Mammary epithelial cell (primary cell): ENCODE measurements at regions of chr18 and their contacts with region 1.

Region 1: DNA sequence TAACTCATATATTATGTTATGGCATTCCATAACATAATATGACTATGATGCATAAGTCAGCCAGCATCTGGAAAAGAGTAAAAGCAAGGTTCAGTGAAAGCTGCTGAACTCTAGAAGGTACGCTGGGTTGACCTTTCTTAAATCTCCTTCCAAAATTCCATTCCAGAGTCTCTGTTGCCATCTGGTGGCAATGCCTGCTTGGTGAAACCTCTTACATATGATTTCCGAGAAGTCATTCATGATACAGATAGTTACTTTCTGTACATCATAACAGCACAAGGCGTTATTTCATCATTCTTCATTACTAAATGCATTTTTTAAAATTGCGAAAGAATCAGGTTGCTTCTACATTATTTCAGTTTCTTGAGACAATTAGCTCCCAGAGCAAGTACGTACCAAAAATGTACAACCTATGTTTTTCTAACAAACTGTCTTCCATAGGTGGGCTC is 7.0 kb upstream of the EPG5 start:
- DNase-seq: peak; percentile 76
- H3K4me3 ChIP-seq: no peak overlapping the region
- H3K27ac ChIP-seq: no peak overlapping the region
- H3K4me1 ChIP-seq: no peaks in the 10 kb centered on the region
- H3K27me3 ChIP-seq: no peaks in the 10 kb centered on the region
- CTCF ChIP-seq: peak; percentile 83 to 87

Region 2: GRCh38 chr18:45664824-45665763 is 309.0 kb before region 1 on chr18:
- CTCF ChIA-PET with region 1: no interaction called
- dilution Hi-C with region 1: no loop called
- in situ Hi-C with region 1: no loop called
- intact Hi-C with region 1: loop called (anchors 1 kb)
- DNase-seq: peak; percentile 34
- H3K4me3 ChIP-seq: no peak overlapping the region
- H3K27ac ChIP-seq: no peak overlapping the region
- H3K4me1 ChIP-seq: no peaks in the 10 kb centered on the region
- H3K27me3 ChIP-seq: no peaks in the 10 kb centered on the region
- CTCF ChIP-seq: peak; percentile 90 to 96

Region 3: DNA sequence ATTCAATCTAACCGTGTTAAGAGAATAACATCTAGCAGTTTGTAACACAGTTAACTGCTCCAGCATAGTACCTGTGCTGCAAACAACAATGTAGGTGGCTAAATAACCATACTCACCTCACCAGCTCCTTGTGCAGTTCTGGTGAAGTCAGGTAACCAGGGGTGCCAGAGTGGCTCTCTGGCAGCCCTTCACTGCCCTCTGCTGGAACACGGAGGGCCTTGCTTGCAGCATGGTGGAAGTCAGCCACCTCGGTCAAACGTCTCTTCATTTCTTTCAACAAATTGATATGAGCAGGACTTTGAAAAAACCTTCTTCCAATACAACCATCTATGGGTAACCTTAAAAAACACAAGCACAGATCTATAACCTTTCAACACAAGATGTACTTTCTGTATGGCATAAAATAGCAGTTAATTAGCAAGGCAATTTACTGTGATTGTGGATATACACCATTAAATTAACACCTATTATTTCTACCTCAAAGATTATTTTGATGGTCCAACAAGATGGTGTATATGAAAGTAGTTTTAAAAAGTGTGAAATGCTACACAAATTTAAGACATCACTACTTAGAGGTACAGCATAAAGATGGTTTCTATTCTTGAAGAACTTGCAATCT is 63.6 kb before region 1 on chr18:
- CTCF ChIA-PET with region 1: interaction called, 5 read pairs
- dilution Hi-C with region 1: no loop called
- in situ Hi-C with region 1: no loop called
- intact Hi-C with region 1: loop called (anchors 1 kb)
- DNase-seq: peak; percentile 32
- H3K4me3 ChIP-seq: no peak overlapping the region
- H3K27ac ChIP-seq: no peak overlapping the region
- H3K4me1 ChIP-seq: no peaks in the 10 kb centered on the region
- H3K27me3 ChIP-seq: no peaks in the 10 kb centered on the region
- CTCF ChIP-seq: peak; percentile 87 to 96

Region 4: GRCh38 chr18:45920367-45920766 is 53.7 kb before region 1 on chr18:
- CTCF ChIA-PET with region 1: no interaction called
- dilution Hi-C with region 1: no loop called
- in situ Hi-C with region 1: no loop called
- intact Hi-C with region 1: loop called (anchors 1 kb)
- DNase-seq: peak; percentile 89
- H3K4me3 ChIP-seq: no peak overlapping the region
- H3K27ac ChIP-seq: peak overlapping the region; percentile 31
- H3K4me1 ChIP-seq: peaks cover 14% of the 10 kb centered on the region
- H3K27me3 ChIP-seq: no peaks in the 10 kb centered on the region
- CTCF ChIP-seq: no peak

Region 5: GRCh38 chr18:45930963-45931362 is 43.1 kb before region 1 on chr18:
- CTCF ChIA-PET with region 1: no interaction called
- dilution Hi-C with region 1: no loop called
- in situ Hi-C with region 1: no loop called
- intact Hi-C with region 1: loop called (anchors 2 kb)
- DNase-seq: no peak
- H3K4me3 ChIP-seq: no peak overlapping the region
- H3K27ac ChIP-seq: no peak overlapping the region
- H3K4me1 ChIP-seq: no peaks in the 10 kb centered on the region
- H3K27me3 ChIP-seq: no peaks in the 10 kb centered on the region
- CTCF ChIP-seq: no peak

Region 6: DNA sequence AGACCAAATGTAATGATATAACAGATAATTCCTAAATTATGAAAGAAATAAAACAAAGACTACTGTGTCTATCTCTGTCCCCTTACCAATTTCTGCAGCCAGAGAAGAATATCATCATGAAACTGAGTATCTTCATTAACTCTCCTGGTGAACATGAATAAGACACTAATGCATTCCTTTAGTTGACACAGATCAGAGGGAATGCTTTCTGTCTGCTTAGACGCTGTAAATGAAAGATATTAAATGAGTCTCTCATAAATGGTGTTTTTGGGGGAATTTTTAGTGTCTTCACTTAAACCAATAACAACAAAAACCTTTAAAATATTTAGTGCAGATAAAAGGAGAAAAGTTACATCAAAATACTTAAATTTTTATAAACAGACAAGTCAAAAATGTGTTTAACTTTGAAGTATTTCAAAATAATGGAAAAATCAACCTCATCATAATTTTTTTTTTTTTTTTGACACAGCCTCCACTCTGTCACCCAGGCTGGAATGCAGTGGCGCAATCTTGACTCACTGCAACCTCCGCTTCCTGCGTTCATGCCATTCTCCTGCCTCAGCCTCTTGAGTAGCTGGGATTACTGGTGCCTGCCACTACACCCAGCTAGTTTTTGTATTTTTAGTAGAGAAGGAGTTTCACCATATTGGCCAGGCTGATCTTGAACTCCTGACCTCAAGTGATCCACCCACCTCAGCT is 22.9 kb before region 1 on chr18:
- CTCF ChIA-PET with region 1: no interaction called
- dilution Hi-C with region 1: no loop called
- in situ Hi-C with region 1: no loop called
- intact Hi-C with region 1: loop called (anchors 1 kb)
- DNase-seq: peak; percentile 86
- H3K4me3 ChIP-seq: no peak overlapping the region
- H3K27ac ChIP-seq: no peak overlapping the region
- H3K4me1 ChIP-seq: peaks cover 21% of the 10 kb centered on the region
- H3K27me3 ChIP-seq: no peaks in the 10 kb centered on the region
- CTCF ChIP-seq: no peak

Region 7: GRCh38 chr18:46073474-46074331 is 99.6 kb after region 1 on chr18:
- CTCF ChIA-PET with region 1: interaction called, 5 read pairs
- dilution Hi-C with region 1: no loop called
- in situ Hi-C with region 1: loop called in 1 of 2 experiments (anchors 10 kb)
- intact Hi-C with region 1: loop called (anchors 1 kb)
- DNase-seq: peak; percentile 63
- H3K4me3 ChIP-seq: no peak overlapping the region
- H3K27ac ChIP-seq: no peak overlapping the region
- H3K4me1 ChIP-seq: peaks cover 17% of the 10 kb centered on the region
- H3K27me3 ChIP-seq: no peaks in the 10 kb centered on the region
- CTCF ChIP-seq: peak; percentile 54 to 66

Region 8: GRCh38 chr18:46518438-46518837 is 544.3 kb after region 1 on chr18:
- CTCF ChIA-PET with region 1: no interaction called
- dilution Hi-C with region 1: no loop called
- in situ Hi-C with region 1: no loop called
- intact Hi-C with region 1: no loop called
- DNase-seq: peak; percentile 13
- H3K4me3 ChIP-seq: no peak overlapping the region
- H3K27ac ChIP-seq: no peak overlapping the region
- H3K4me1 ChIP-seq: no peaks in the 10 kb centered on the region
- H3K27me3 ChIP-seq: no peaks in the 10 kb centered on the region
- CTCF ChIP-seq: peak in 1 of 2 donors; percentile 53